ENCODE measurements at regions of chr18 and their contacts with region 1.

Region 1: DNA sequence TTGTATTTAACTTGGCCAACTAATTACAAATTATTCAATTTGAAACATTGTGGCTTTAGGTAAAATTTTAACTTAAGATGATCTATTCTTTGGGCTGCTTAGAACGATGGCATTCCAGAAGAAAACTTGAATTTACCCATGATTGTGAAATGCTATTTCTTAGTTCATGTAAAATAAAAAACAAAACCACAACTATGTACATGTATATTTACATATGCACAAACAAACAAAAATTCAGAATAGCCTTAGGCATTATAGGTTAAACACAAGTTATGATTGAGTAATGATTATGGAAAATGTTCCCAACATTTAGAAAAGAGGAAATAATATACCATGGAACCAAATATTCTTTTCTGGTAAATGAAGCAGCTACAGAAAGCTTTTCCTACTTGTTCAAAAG is 3.5 kb upstream of the SMCHD1 start:
- DNase-seq: no peak
- CTCF ChIP-seq: no peak

Region 2: DNA sequence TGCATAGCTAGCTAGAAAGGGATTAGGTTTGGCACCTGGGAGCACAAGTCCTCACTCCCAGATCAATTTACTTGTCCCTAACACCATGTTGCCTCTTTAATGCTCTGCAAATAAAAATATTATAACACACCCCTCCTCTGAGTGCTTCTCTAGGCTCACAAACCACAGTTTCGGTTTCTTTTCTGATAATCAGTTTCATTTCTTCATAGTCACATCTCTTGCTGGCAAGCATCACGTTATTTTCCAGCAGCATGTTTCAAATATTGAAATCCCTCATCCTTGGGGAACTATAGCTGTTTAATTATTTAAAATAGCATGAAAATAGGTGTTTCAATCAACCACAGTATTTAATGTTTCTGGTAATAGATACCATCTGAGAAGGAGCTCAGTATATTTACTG is 10.3 kb before region 1 on chr18:
- CTCF ChIA-PET with region 1: interaction called, 11 read pairs
- POLR2A ChIA-PET with region 1: interaction called, 5 read pairs
- DNase-seq: peak; percentile 72
- CTCF ChIP-seq: no peak

Region 3: GRCh38 chr18:2672872-2673271 is 20.9 kb after region 1 on chr18:
- CTCF ChIA-PET with region 1: no interaction called
- POLR2A ChIA-PET with region 1: no interaction called
- DNase-seq: no peak
- CTCF ChIP-seq: no peak

Measured in GM10248 (cell line).